Naive thymus-derived CD8-positive, alpha-beta T cell (primary cell): ENCODE measurements at regions of chr16 and their contacts with region 1.

Region 1: GRCh38 chr16:85461814-85462713 is 151.1 kb upstream of the GSE1 start:
- DNase-seq: peak in 6 of 10 donors; percentile 8 to 43 (median 32)
- ATAC-seq: peak; percentile 77 to 80
- H3K4me3 Mint-ChIP-seq: peak overlapping the region; percentile 83 to 95 (median 88)
- H3K27ac Mint-ChIP-seq: peak overlapping the region in 6 of 10 donors; percentile 44 to 89 (median 76)
- H3K4me1 Mint-ChIP-seq: peaks cover 5 to 21% (median 13%) of the 10 kb centered on the region in 4 donors
- H3K27me3 Mint-ChIP-seq: peaks cover 2 to 12% (median 10%) of the 10 kb centered on the region in 5 donors

Region 2: GRCh38 chr16:85610508-85611332 is 148.7 kb after region 1 on chr16:
- POLR2A ChIA-PET with region 1: interaction called, 13 read pairs
- DNase-seq: peak; percentile 76 to 93 (median 88)
- ATAC-seq: peak; percentile 56 to 68
- H3K4me3 Mint-ChIP-seq: peak overlapping the region; percentile 74 to 92 (median 84)
- H3K27ac Mint-ChIP-seq: peak overlapping the region; percentile 47 to 87 (median 80)
- H3K4me1 Mint-ChIP-seq: peaks cover 11 to 57% (median 41%) of the 10 kb centered on the region in 4 donors
- H3K27me3 Mint-ChIP-seq: no peaks in the 10 kb centered on the region